Caco-2 (cell line): ENCODE measurements at regions of chr3 and their contacts with region 1.

Region 1: GRCh38 chr3:185659942-185660921 is 74.1 kb downstream of the SENP2 start:
- DNase-seq: peak; percentile 70 to 78
- H3K4me3 ChIP-seq: no peak overlapping the region
- H3K4me3 Mint-ChIP-seq: no peak overlapping the region
- H3K27ac Mint-ChIP-seq: no peak overlapping the region
- H3K4me1 ChIP-seq: no peaks in the 10 kb centered on the region
- H3K4me1 Mint-ChIP-seq: peaks cover 7% of the 10 kb centered on the region
- H3K27me3 ChIP-seq: no peaks in the 10 kb centered on the region
- H3K27me3 Mint-ChIP-seq: no peaks in the 10 kb centered on the region
- CTCF ChIP-seq: peak; percentile 89 to 96

Region 2: GRCh38 chr3:185630182-185630622 is 30.0 kb before region 1 on chr3:
- CTCF ChIA-PET with region 1: interaction called, 12 read pairs
- POLR2A ChIA-PET with region 1: no interaction called
- intact Hi-C with region 1: no loop called
- DNase-seq: peak; percentile 55 to 66
- H3K4me3 ChIP-seq: no peak overlapping the region
- H3K4me3 Mint-ChIP-seq: peak overlapping the region; percentile 62
- H3K27ac Mint-ChIP-seq: peak overlapping the region; percentile 95
- H3K4me1 ChIP-seq: peaks cover 13% of the 10 kb centered on the region
- H3K4me1 Mint-ChIP-seq: peaks cover 9% of the 10 kb centered on the region
- H3K27me3 ChIP-seq: no peaks in the 10 kb centered on the region
- H3K27me3 Mint-ChIP-seq: no peaks in the 10 kb centered on the region
- CTCF ChIP-seq: no peak

Region 3: DNA sequence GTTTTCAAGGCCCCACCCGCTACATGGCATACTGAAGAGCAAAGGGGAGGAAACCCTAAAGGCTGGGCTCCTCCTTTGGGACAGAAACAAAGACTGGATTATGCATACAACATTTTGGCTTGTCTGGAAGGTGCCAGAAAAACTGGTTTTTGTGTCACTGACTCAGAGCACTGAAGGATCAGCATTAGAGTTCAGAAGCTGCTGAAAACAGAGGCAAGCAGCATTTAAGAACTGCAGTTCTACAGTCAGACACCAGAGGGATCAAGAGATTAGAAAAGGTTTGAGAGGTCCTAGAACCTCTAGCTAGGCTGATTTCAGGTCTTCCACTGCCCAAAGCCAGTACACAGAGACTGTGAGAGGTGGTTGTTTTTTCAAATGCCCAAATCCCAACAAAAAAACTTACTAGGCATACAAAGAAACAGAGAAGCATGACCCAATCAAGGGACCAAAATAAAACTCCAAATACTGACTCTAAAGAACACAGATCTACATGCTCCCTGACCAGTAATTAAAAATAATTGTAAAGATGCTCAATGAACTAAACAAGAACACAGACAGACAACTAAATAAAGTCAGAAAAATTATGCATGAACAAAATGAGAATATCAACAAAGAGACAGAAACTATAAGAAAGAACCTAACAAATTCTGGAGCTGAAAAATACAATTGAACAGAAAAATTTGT is 17.1 kb after region 1 on chr3:
- CTCF ChIA-PET with region 1: interaction called, 22 read pairs
- POLR2A ChIA-PET with region 1: no interaction called
- intact Hi-C with region 1: no loop called
- DNase-seq: peak in 1 of 2 experiments; percentile 69
- H3K4me3 ChIP-seq: no peak overlapping the region
- H3K4me3 Mint-ChIP-seq: no peak overlapping the region
- H3K27ac Mint-ChIP-seq: no peak overlapping the region
- H3K4me1 ChIP-seq: no peaks in the 10 kb centered on the region
- H3K4me1 Mint-ChIP-seq: no peaks in the 10 kb centered on the region
- H3K27me3 ChIP-seq: no peaks in the 10 kb centered on the region
- H3K27me3 Mint-ChIP-seq: no peaks in the 10 kb centered on the region
- CTCF ChIP-seq: peak; percentile 67 to 76

Region 4: GRCh38 chr3:185764163-185764979 is 104.1 kb after region 1 on chr3:
- CTCF ChIA-PET with region 1: interaction called, 19 read pairs
- POLR2A ChIA-PET with region 1: no interaction called
- intact Hi-C with region 1: loop called (anchors 2 kb)
- DNase-seq: no peak
- H3K4me3 ChIP-seq: no peak overlapping the region
- H3K4me3 Mint-ChIP-seq: no peak overlapping the region
- H3K27ac Mint-ChIP-seq: no peak overlapping the region
- H3K4me1 ChIP-seq: no peaks in the 10 kb centered on the region
- H3K4me1 Mint-ChIP-seq: peaks cover 19% of the 10 kb centered on the region
- H3K27me3 ChIP-seq: no peaks in the 10 kb centered on the region
- H3K27me3 Mint-ChIP-seq: no peaks in the 10 kb centered on the region
- CTCF ChIP-seq: no peak

Region 5: GRCh38 chr3:185824476-185825378 is 164.5 kb after region 1 on chr3 and contains the start of gene IGF2BP2:
- CTCF ChIA-PET with region 1: interaction called, 4 read pairs
- POLR2A ChIA-PET with region 1: no interaction called
- intact Hi-C with region 1: loop called (anchors 5 kb)
- DNase-seq: peak; percentile 88 to 91
- H3K4me3 ChIP-seq: peak within 1 kb of the TSS; percentile 94
- H3K4me3 Mint-ChIP-seq: peak within 1 kb of the TSS; percentile 85
- H3K27ac Mint-ChIP-seq: peak within 1 kb of the TSS; percentile 98
- H3K4me1 ChIP-seq: peaks cover 23% of the 10 kb centered on the region
- H3K4me1 Mint-ChIP-seq: peaks cover 19% of the 10 kb centered on the region
- H3K27me3 ChIP-seq: no peaks in the 10 kb centered on the region
- H3K27me3 Mint-ChIP-seq: no peaks in the 10 kb centered on the region
- CTCF ChIP-seq: peak in 1 of 2 experiments; percentile 8
- total RNA-seq, gene IGF2BP2: 75.9 and 80.8 TPM in 2 replicates